Sigmoid colon (tissue), 7 donors: ENCODE measurements at regions of chr10 and their contacts with region 1.

Region 1: GRCh38 chr10:63261496-63261895 is 128.4 kb downstream of the NRBF2 start:
- DNase-seq: no peak
- H3K4me3 ChIP-seq: no peak overlapping the region
- H3K27ac ChIP-seq: peak overlapping the region; percentile 15 to 91 (median 90)
- H3K4me1 ChIP-seq: peaks cover 0 to 78% (median 65%) of the 10 kb centered on the region in 4 donors
- H3K27me3 ChIP-seq: no peaks in the 10 kb centered on the region
- CTCF ChIP-seq: no peak
- EP300 ChIP-seq: no peak
- POLR2A ChIP-seq: no peak

Region 2: DNA sequence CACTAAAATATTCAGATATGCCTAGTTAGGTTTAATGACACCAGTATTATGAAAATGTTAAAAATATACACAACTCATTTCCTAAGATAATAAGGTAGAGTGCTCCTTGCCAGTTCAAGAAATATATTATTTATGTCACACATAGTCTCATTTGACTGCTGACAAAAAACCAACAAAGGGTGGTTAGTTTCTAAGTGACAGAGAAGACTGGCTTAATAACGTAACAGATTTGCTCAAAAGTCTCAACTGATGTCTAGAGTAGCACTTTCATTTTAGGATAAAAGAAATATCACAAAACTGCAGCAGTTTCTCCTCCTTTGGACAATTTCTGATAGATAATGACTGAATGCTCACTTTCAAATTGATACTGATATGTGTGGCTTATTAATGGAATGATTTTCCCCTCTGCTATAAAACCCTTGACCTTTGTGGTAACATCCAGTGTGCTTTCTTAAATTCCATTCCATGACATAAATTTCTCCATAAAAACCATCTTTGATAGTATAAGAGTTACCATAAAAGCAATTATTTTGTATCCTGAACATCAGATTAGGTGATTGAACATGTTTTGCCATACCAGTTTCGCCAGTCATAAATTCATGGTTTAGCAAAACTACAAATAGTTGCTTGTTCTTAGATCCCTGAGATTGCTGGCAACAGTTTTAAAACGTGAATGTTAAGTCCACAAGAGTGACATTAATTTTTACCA is 34.1 kb before region 1 on chr10:
- intact Hi-C with region 1: loop called (anchors 5 kb)
- DNase-seq: no peak
- H3K4me3 ChIP-seq: no peak overlapping the region
- H3K27ac ChIP-seq: peak overlapping the region in 2 of 4 donors; percentile 23 to 32
- H3K4me1 ChIP-seq: peaks cover 0 to 48% (median 27%) of the 10 kb centered on the region in 4 donors
- H3K27me3 ChIP-seq: no peaks in the 10 kb centered on the region
- CTCF ChIP-seq: no peak
- EP300 ChIP-seq: no peak
- POLR2A ChIP-seq: no peak

Region 3: DNA sequence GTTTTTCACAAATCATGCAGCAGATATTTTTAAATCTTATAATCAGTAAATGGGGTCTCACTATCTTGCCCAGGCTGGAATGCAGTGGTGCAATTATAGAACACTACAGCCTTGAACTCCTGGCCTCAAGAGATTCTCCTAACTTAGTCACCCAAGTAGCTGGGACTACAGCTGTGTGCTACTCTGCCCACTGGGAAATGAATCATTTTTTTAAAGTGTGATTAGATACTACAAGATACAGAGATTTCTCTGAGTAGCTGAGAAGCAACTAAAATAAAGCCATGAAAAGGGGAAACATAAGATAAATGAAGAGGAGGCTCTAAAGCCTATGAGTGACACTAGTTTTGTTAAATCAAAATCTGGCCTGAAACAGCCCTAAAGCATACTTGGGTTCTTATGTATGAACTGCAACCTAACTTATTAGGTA is 84.5 kb after region 1 on chr10:
- intact Hi-C with region 1: no loop called
- DNase-seq: no peak
- H3K4me3 ChIP-seq: no peak overlapping the region
- H3K27ac ChIP-seq: no peak overlapping the region
- H3K4me1 ChIP-seq: no peaks in the 10 kb centered on the region
- H3K27me3 ChIP-seq: no peaks in the 10 kb centered on the region
- CTCF ChIP-seq: no peak
- EP300 ChIP-seq: no peak
- POLR2A ChIP-seq: no peak